Panc1 (cell line): ENCODE measurements at regions of chr7 and their contacts with region 1.

Region 1: GRCh38 chr7:75928331-75928909 is 13.5 kb downstream of the POR start:
- DNase-seq: no peak
- ATAC-seq: peak; percentile 19; the same call in 1 of the 2 replicates
- H3K4me3 ChIP-seq: no peak overlapping the region
- H3K27ac ChIP-seq: no peak overlapping the region
- H3K4me1 ChIP-seq: no peaks in the 10 kb centered on the region; the same call in 1 of the 2 replicates
- H3K27me3 ChIP-seq: no peaks in the 10 kb centered on the region
- CTCF ChIP-seq: no peak

Region 2: DNA sequence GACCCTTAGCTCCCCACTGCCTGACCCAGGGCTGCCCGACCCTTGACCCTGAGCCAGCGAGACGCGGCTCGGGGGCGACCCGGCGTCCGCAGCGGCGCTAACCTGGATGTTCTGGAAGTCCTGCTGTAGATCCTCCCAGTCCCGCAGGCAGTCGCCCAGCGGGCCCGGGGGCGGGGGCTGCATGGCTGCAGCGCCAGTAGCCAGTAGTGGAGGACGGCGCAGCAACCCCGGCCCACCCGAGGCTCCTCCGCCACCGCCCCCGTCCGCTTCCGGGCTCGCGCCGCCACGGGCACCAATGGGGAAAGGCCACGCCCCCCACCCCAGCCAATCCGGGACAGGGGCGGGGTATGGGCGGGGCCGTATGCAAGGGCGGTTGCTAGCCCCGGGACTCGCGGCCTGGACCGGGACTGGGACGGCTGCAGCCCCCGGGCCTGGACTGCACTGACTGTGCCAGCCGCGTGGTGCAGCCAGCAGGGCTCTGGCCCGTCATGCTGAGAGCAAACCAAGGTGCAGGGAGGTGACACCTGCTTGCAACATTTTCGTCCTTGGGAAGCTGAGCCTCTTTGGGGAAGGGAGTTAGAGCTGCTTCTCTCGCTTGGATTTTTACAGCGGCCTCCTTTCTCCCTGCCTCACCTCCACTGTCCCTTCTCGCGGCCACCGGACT is 66.1 kb after region 1 on chr7 and contains the start of gene TMEM120A:
- CTCF ChIA-PET with region 1: interaction called, 10 read pairs
- POLR2A ChIA-PET with region 1: no interaction called
- in situ Hi-C with region 1: no loop called
- intact Hi-C with region 1: no loop called
- DNase-seq: peak; percentile 30
- ATAC-seq: peak; percentile 95
- H3K4me3 ChIP-seq: peak within 1 kb of the TSS; percentile 77 to 88
- H3K27ac ChIP-seq: peak within 1 kb of the TSS; percentile 87
- H3K4me1 ChIP-seq: peaks cover 22% of the 10 kb centered on the region
- H3K27me3 ChIP-seq: no peaks in the 10 kb centered on the region
- CTCF ChIP-seq: no peak
- total RNA-seq, gene TMEM120A: 71.0 TPM